Dorsolateral prefrontal cortex (tissue), 120 donors: ENCODE measurements at regions of chr3 and their contacts with region 1.

Region 1: GRCh38 chr3:126357295-126358037 is at the start of gene KLF15:
- DNase-seq: peak; percentile 82 to 96 (median 90)
- H3K4me3 ChIP-seq: peak within 1 kb of the TSS; percentile 61 to 95 (median 82)
- H3K27ac ChIP-seq: peak within 1 kb of the TSS; percentile 90 to 100 (median 98)
- H3K27me3 ChIP-seq: no peaks in the 10 kb centered on the region
- CTCF ChIP-seq: peak in 1 of 56 donors; percentile 14
- total RNA-seq, gene KLF15: 11.7 to 112 (median 39.5) TPM

Region 2: DNA sequence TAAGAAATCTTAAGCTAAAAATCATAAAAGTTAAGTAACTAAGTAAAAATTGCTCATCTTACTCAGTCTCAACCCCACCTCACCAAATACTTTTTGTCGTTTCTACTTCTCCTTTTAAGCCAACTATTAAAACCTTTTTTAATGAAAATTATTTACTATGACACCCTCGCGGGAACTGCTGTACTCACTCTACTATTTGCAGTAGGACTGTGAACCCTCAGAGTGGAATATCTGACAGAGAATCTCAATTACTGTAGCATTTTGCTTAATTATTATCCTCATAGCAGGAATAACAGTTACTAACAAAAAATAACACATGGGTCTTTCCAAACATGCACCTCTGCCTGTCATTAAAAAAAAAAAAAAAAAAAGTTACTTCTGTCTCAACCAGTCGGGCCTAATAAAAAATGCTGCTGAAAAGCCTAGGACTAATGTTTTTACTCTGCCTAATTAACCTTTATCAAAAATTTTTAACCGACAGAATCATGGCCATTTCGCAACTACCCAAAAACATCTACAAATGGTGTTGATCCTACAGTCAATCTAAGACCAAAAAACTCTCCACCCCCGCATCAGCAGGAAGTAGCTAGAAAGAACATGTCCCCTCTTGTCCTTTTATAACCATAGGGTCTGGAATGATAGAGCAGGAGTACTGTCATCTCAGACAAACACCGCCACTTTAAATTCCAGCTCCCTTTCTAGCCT is 187.2 kb before region 1 on chr3:
- intact Hi-C with region 1: no loop called
- DNase-seq: no peak
- H3K4me3 ChIP-seq: no peak overlapping the region
- H3K27ac ChIP-seq: peak overlapping the region in 1 of 59 donors; percentile 15
- H3K27me3 ChIP-seq: peaks cover 0 to 25% (median 0%) of the 10 kb centered on the region in 45 donors
- CTCF ChIP-seq: no peak

Region 3: GRCh38 chr3:126180477-126181397 is 176.7 kb before region 1 on chr3 and contains the start of gene ALDH1L1:
- intact Hi-C with region 1: no loop called
- DNase-seq: peak in 8 of 10 donors; percentile 47 to 83 (median 74)
- H3K4me3 ChIP-seq: peak within 1 kb of the TSS; percentile 25 to 73 (median 58)
- H3K27ac ChIP-seq: peak within 1 kb of the TSS in 55 of 59 donors; percentile 16 to 93 (median 80)
- H3K27me3 ChIP-seq: peaks cover 0 to 36% (median 16%) of the 10 kb centered on the region in 45 donors
- CTCF ChIP-seq: no peak
- total RNA-seq, gene ALDH1L1: 34.5 to 185 (median 74.8) TPM

Region 4: DNA sequence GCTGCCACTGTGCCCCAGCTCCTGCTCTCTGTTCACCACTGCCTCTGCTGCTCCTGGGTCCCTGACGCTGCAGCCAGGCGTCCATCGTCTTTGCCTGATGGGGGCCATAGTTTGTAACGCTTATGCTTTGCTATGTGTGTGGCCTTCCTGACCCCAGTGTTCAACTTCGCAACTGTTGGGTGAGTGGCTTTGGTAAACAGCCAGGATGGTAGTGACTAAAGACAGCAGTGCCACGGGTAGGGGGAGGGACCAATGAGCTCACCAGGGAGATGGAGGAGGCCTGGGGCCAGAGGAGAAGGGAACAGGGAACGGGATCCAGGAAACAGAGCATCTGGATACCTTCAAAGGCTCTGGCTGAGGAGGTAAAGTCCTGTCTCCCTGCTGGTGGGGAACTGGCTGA is 101.2 kb before region 1 on chr3:
- intact Hi-C with region 1: no loop called
- DNase-seq: no peak
- H3K4me3 ChIP-seq: no peak overlapping the region
- H3K27ac ChIP-seq: no peak overlapping the region
- H3K27me3 ChIP-seq: no peaks in the 10 kb centered on the region
- CTCF ChIP-seq: no peak

Region 5: DNA sequence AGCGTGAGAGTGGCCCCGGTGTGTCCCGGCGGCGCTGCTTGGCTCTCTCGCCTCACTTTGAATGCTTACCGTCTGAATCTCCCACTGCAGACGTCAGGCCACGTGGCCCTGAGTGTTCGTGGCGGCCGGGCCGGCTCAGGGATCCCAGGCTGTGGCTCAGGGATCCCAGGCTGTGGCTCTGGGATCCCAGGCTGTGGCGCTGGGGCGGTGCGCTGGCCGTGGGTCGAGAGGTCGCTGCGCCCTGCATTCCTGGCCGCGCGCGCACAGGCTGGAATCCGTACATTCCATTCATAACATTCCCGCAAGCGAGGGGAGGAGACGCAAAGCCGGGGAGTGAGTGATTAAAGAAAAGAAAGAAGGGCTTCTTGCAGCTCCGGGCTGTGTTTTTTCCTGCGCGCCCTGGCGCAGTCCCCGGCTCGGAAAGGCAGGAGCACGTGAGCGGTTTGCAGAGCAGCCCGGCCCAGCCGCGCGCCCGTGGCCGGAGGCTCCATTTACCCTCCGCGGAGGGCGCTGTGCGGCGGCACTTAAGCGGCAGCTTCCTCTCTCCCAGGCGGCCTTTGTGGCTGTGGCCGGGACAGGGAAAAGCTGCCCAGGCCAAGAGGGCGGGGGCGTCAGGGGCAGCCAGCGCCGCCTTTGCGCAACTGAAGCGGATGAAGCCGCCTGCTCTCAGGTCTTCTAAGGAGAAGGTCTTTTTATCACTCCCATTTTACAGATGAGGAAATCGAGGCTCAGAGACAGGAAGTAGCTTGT is 90.1 kb before region 1 on chr3:
- intact Hi-C with region 1: loop called (anchors 1 to 2 kb)
- DNase-seq: peak; percentile 30 to 81 (median 69)
- H3K4me3 ChIP-seq: peak overlapping the region; percentile 32 to 72 (median 53)
- H3K27ac ChIP-seq: peak overlapping the region in 57 of 59 donors; percentile 2 to 86 (median 67)
- H3K27me3 ChIP-seq: no peaks in the 10 kb centered on the region
- CTCF ChIP-seq: peak in 37 of 56 donors; percentile 9 to 59 (median 31)

Region 6: DNA sequence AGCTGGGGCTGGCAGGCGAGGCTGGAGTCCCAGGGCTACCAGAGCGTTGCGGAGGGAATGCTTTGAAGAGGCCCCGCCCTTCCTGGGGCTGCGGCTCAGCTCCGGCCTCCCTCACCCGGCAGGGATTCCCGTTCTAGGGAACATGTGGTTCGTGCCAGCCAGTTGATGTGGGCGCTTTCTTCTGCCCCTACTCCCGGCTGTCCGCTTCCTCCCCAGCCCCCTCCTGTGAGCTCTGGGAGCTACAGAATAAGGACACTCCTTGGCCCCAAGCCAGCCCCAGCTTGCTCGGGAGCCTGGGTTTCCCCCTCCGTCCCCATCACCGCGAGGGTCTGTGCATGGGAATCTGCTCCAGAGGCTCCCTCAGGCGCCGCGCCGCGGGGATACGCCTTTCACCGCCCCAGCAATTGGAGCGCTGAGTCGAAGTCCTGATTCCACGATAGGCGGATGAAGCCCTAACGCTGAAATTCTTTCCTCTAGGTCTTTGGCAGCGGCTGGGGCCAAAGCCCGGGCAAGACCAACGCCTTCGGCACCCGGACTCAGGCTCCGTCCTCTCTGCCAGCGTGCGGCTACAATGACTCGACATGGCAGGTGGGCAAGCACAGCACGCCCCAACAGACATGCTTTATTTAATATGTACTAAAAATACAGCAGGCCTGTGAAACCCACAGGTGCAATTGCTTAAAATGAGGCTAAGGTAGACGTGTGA is 69.8 kb before region 1 on chr3:
- intact Hi-C with region 1: loop called (anchors 5 kb)
- DNase-seq: peak; percentile 48 to 91 (median 82)
- H3K4me3 ChIP-seq: peak overlapping the region; percentile 33 to 75 (median 62)
- H3K27ac ChIP-seq: peak overlapping the region in 57 of 59 donors; percentile 18 to 94 (median 82)
- H3K27me3 ChIP-seq: no peaks in the 10 kb centered on the region
- CTCF ChIP-seq: peak in 4 of 56 donors; percentile 6 to 17 (median 8)

Region 7: GRCh38 chr3:126582311-126582710 is 224.8 kb after region 1 on chr3:
- intact Hi-C with region 1: no loop called
- DNase-seq: no peak
- H3K4me3 ChIP-seq: no peak overlapping the region
- H3K27ac ChIP-seq: no peak overlapping the region
- H3K27me3 ChIP-seq: no peaks in the 10 kb centered on the region
- CTCF ChIP-seq: no peak